ENCODE measurements at regions of chr2 and their contacts with region 1.

Region 1: GRCh38 chr2:202278944-202279343 is 13.4 kb downstream of the NOP58 start:
- DNase-seq: no peak
- H3K4me3 ChIP-seq: no peak overlapping the region
- CTCF ChIP-seq: peak; percentile 59

Region 2: GRCh38 chr2:201984800-201985525 is 294.0 kb before region 1 on chr2:
- CTCF ChIA-PET with region 1: no interaction called
- POLR2A ChIA-PET with region 1: no interaction called
- DNase-seq: no peak
- H3K4me3 ChIP-seq: no peak overlapping the region
- CTCF ChIP-seq: no peak

Region 3: GRCh38 chr2:202267495-202267894 is 11.4 kb before region 1 on chr2:
- CTCF ChIA-PET with region 1: interaction called, 22 read pairs
- POLR2A ChIA-PET with region 1: no interaction called
- DNase-seq: no peak
- H3K4me3 ChIP-seq: peak overlapping the region; percentile 90
- CTCF ChIP-seq: no peak

Region 4: GRCh38 chr2:202299712-202300111 is 20.8 kb after region 1 on chr2:
- CTCF ChIA-PET with region 1: interaction called, 12 read pairs
- POLR2A ChIA-PET with region 1: no interaction called
- DNase-seq: no peak
- H3K4me3 ChIP-seq: no peak overlapping the region
- CTCF ChIP-seq: no peak

Region 5: DNA sequence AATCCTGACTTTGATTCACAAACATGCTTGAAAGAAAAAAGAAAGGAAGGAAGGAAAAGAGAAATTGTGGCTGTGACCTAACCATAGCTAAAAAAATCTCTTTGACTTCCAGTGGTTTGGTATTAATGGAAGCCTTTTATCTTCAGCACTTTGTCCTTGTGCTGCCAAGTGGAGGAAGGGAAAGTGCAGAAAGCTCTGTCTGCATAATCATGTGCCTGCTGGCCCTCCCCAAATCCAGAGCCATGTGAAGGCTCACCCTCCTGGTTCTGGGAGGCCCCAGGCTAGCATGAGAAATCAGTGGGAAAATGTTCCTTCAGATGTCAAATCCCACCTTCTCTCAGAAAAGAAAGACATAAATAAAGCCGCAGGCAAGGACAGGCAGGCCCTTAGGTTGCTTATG is 48.9 kb after region 1 on chr2:
- CTCF ChIA-PET with region 1: no interaction called
- POLR2A ChIA-PET with region 1: no interaction called
- DNase-seq: no peak
- H3K4me3 ChIP-seq: no peak overlapping the region
- CTCF ChIP-seq: no peak